Sciatic nerve (tissue), 2 donors: ENCODE measurements at regions of chr2 and their contacts with region 1.

Region 1: GRCh38 chr2:120675460-120676130 is 60.1 kb upstream of the GLI2 start:
- DNase-seq: no peak
- ATAC-seq: peak; percentile 55

Region 2: DNA sequence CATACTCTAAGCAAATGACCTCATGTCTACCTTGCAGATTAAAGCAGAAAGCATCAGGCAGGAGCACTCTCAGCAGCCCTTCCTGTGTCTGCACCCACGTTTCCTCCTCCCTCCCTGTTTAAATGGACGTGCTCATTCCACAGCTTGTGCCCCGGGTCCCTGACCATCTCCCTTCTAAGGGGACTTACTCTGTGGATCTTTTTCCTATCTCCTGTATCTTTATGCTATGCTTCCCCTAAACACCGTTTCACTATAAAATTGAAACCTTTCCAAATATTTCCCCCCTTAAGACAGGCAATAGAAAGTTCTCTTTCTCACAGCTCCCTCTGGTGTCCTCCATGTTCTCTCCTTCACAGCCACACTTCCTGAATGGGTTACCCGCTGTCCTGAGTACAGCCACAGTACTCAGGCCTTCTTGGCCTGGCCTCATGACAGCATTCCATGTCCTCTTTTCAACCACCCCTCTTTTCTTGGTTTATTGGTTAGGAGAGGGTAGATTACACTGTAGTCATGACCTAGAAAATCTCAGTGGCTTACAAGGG is 493.5 kb before region 1 on chr2:
- intact Hi-C with region 1: no loop called
- DNase-seq: no peak
- ATAC-seq: no peak

Region 3: DNA sequence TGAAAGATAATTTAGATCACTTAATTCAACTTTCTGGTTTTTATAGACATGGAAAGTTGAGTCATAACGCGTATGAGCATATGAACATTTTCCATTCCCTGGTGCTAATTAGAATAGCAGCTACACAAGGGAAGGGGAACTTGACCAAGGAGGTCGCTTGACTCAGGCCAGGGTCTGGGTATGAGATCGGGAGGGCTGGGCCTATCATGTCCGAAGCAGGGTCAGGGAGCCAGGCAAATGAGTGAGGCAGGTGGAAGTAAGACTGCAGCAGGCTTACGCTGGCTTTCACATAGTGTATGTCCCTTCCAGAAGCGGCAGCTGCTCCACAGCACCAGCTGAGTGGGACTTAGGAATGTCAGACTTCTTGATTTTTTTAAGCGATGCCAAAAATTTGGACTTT is 408.2 kb before region 1 on chr2:
- intact Hi-C with region 1: no loop called
- DNase-seq: no peak
- ATAC-seq: no peak

Region 4: GRCh38 chr2:120312861-120313694 is 362.5 kb before region 1 on chr2:
- intact Hi-C with region 1: loop called (anchors 10 kb)
- DNase-seq: peak; percentile 92
- ATAC-seq: peak; percentile 91

Region 5: DNA sequence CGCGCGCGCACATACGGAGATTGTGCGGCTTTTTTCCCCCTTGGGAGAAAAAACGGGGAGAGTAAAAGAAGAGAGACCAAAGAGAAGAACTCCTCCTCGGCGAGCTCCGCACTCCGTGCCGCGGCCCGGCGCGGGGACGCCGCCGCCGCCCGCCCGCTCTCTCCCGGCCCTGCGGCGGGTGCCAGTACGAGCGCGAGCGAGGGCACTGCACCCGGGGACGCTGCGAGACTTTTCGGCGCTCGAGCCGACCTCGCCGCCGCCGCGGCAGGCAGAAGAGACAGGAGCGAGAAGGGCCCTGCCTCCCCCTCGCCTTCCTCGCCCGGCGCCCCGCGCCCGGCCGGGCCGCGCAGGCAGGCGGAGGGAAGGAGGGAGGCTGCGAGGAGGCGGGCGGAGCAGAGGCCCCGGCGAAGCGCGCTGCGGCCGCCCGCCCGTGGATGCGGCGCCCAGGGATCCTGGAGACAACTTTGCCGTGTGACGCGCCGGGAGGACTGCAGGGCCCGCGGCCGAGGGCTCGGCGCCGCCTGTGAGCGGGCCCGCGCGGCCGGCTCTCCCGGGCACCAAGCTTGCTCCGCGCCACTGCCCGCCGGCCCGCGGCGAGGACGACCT is 330.5 kb before region 1 on chr2:
- intact Hi-C with region 1: loop called (anchors 5 kb)
- DNase-seq: no peak
- ATAC-seq: no peak

Region 6: GRCh38 chr2:120740765-120741524 is 65.3 kb after region 1 on chr2:
- intact Hi-C with region 1: no loop called
- DNase-seq: no peak
- ATAC-seq: peak; percentile 38